Activated CD4-positive, alpha-beta T cell treated with anti-CD3 and anti-CD28 coated beads, Interleukin-2, amount 10 ng/mL, durations not matched to agents 24 days and 14 days (primary cell): ENCODE measurements at regions of chr6 and their contacts with region 1.

Region 1: DNA sequence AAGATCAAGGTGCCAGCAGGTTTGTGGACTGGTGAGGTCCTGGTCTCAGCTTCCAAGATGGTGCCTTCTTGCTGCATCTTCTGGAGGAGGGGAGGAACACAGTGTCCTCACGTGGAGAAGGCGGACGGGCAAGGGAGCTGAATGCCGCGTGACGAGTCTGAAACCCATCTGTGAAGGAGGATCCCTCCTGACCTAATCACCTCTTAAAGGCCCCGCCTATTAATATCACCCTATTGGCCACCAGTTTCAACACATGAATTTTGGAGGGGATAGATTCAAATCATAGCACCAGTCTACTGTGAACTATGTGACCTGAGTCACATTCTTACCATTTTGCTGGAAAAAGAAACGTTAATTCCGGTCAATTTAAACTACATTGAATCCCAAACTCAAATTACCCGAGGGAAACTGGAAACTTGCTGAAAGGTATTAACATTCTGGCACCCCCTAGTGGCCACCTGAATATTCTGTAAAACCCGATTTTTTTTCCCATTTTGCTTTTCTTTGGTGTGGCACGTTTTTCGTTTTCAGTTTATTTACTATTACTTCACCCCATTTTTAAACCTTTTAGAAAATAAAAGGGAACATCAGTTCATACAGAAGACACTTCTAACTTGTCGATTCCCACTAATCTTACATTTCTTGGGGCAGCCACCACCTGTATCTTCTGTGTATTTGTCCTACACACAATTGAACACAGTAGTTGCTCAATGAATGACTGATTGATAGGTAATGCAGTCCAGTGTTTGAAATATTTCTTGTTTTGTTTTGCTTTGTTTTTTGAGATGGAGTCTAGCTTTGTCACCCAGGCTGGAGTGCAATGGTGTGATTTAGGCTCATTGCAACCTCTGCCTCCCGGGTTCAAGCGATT is 17.9 kb upstream of the CCDC170 start:
- DNase-seq: peak; percentile 83
- H3K4me3 Mint-ChIP-seq: no peak overlapping the region
- H3K27ac Mint-ChIP-seq: no peak overlapping the region
- H3K4me1 Mint-ChIP-seq: peaks cover 6% of the 10 kb centered on the region
- H3K27me3 Mint-ChIP-seq: no peaks in the 10 kb centered on the region

Region 2: DNA sequence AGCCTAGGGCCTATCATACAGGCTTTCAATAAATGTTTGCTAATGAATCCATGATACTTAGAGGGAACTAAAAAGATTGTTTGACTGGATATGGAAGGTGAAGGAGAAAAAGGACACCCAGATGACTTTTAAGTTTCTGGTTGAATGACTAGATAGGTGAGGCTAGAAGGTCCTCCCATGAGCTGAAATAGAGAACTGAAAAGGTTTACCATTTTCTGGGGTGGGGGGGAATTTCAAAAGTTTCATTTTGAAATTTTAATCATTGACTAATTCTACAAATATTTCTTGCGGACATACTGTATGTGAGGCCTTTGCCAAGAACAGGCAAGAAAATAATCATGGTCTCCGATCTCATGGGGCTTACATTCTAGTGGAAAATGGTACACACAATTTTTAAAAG is 66.6 kb before region 1 on chr6:
- intact Hi-C with region 1: loop called (anchors 5 kb)
- DNase-seq: no peak
- H3K4me3 Mint-ChIP-seq: no peak overlapping the region
- H3K27ac Mint-ChIP-seq: no peak overlapping the region
- H3K4me1 Mint-ChIP-seq: peaks cover 12% of the 10 kb centered on the region
- H3K27me3 Mint-ChIP-seq: no peaks in the 10 kb centered on the region

Region 3: DNA sequence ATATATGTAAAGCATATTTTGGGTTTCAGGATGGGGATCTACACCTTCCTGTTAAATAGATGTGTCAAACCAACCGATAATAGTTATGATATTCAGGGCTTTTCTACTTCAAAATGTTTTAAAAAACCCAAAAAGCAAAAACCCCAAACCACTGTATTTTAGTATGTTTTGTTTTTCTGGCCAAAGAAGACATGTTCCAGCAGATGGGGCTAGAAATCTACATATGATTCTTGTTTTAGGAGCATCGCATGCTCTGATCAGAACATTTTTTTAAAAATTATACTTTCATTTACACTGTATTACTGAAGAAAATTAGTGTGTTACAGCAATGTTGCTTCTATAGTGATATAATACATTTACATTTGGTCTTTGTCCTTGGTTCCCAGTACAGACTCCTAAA is 35.0 kb before region 1 on chr6:
- intact Hi-C with region 1: loop called (anchors 2 kb)
- DNase-seq: no peak
- H3K4me3 Mint-ChIP-seq: no peak overlapping the region
- H3K27ac Mint-ChIP-seq: no peak overlapping the region
- H3K4me1 Mint-ChIP-seq: peaks cover 15% of the 10 kb centered on the region
- H3K27me3 Mint-ChIP-seq: no peaks in the 10 kb centered on the region

Region 4: DNA sequence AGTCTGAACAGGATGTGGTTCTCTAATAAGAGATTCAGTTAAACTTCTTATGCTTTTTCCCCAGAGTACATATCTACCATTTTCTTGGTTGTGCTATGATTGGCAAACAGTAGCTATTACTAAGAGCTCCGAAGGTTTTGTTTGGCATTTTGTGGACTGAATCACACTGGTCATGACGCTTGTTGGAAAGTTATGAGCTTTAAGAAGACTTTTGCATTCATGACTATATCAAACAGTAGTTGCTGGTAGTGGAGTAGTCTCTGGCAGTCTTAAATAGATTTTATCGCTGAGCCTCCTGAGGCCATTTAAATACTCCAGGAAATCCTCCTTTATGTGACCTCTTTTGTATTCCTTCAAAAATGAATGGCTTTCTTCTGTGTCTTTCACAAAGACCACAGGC is 58.7 kb after region 1 on chr6:
- intact Hi-C with region 1: no loop called
- DNase-seq: no peak
- H3K4me3 Mint-ChIP-seq: no peak overlapping the region
- H3K27ac Mint-ChIP-seq: no peak overlapping the region
- H3K4me1 Mint-ChIP-seq: no peaks in the 10 kb centered on the region
- H3K27me3 Mint-ChIP-seq: peaks cover 5% of the 10 kb centered on the region